WTC11 (cell line): ENCODE measurements at regions of chr3 and their contacts with region 1.

Region 1: GRCh38 chr3:64224826-64225610 is at the start of gene PRICKLE2:
- DNase-seq: peak; percentile 61
- ATAC-seq: peak; percentile 90
- H3K4me3 Mint-ChIP-seq: peak within 1 kb of the TSS; percentile 62
- H3K27ac Mint-ChIP-seq: peak within 1 kb of the TSS; percentile 87
- H3K4me1 Mint-ChIP-seq: peaks cover 55% of the 10 kb centered on the region
- H3K27me3 Mint-ChIP-seq: peaks cover 49% of the 10 kb centered on the region
- CTCF ChIP-seq: no peak
- total RNA-seq, gene PRICKLE2: 4.5 to 5.6 TPM (median 4.7 TPM) in 3 replicates

Region 2: GRCh38 chr3:64214381-64215018 is 10.5 kb before region 1 on chr3:
- CTCF ChIA-PET with region 1: interaction called, 14 read pairs
- POLR2A ChIA-PET with region 1: no interaction called
- DNase-seq: no peak
- ATAC-seq: no peak
- H3K4me3 Mint-ChIP-seq: no peak overlapping the region
- H3K27ac Mint-ChIP-seq: no peak overlapping the region
- H3K4me1 Mint-ChIP-seq: peaks cover 47% of the 10 kb centered on the region
- H3K27me3 Mint-ChIP-seq: peaks cover 63% of the 10 kb centered on the region
- CTCF ChIP-seq: no peak